H1 (cell line): ENCODE measurements at regions of chr1 and their contacts with region 1.

Region 1: GRCh38 chr1:93814059-93814794 is 64.8 kb downstream of the DNTTIP2 start:
- DNase-seq: peak in 1 of 2 experiments; percentile 67
- H3K4me3 ChIP-seq: no peak overlapping the region
- H3K27ac ChIP-seq: no peak overlapping the region
- H3K4me1 ChIP-seq: peaks cover 6 to 17% (median 7%) of the 10 kb centered on the region in 4 experiments; a peak in 6 of 7 replicates
- H3K27me3 ChIP-seq: no peaks in the 10 kb centered on the region
- CTCF ChIP-seq: peak in 2 of 3 experiments; percentile 97 to 99; a peak in 3 of 4 replicates
- EP300 ChIP-seq: no peak
- POLR2A ChIP-seq: no peak
- RAD21 ChIP-seq: peak; percentile 100

Region 2: GRCh38 chr1:93629099-93630059 is 184.8 kb before region 1 on chr1:
- CTCF ChIA-PET with region 1: interaction called, 620 read pairs
- POLR2A ChIA-PET with region 1: interaction called, 6 read pairs
- DNase-seq: no peak
- H3K4me3 ChIP-seq: no peak overlapping the region
- H3K27ac ChIP-seq: no peak overlapping the region
- H3K4me1 ChIP-seq: 0 out of 7 replicates have a peak, but pooled peaks cover 0 to 2% (median 0%) of the 10 kb centered on the region in 4 experiments
- H3K27me3 ChIP-seq: no peaks in the 10 kb centered on the region
- CTCF ChIP-seq: peak in 2 of 3 experiments; percentile 81 to 86; a peak in 3 of 4 replicates
- EP300 ChIP-seq: no peak; a peak in 1 of 3 replicates
- POLR2A ChIP-seq: no peak
- RAD21 ChIP-seq: peak; percentile 98 to 99

Region 3: GRCh38 chr1:93680757-93681550 is 133.3 kb before region 1 on chr1:
- CTCF ChIA-PET with region 1: interaction called, 23 read pairs
- POLR2A ChIA-PET with region 1: interaction called, 3 read pairs
- DNase-seq: peak; percentile 50 to 84
- H3K4me3 ChIP-seq: peak overlapping the region; percentile 64 to 87 (median 70)
- H3K27ac ChIP-seq: no peak overlapping the region
- H3K4me1 ChIP-seq: peaks cover 5 to 12% (median 5%) of the 10 kb centered on the region in 4 experiments
- H3K27me3 ChIP-seq: peaks cover 0 to 8% (median 2%) of the 10 kb centered on the region in 4 experiments; a peak in 4 of 7 replicates
- CTCF ChIP-seq: peak; percentile 59 to 91 (median 84)
- EP300 ChIP-seq: no peak
- POLR2A ChIP-seq: no peak; a peak in 1 of 3 replicates
- RAD21 ChIP-seq: peak; percentile 61 to 68

Region 4: DNA sequence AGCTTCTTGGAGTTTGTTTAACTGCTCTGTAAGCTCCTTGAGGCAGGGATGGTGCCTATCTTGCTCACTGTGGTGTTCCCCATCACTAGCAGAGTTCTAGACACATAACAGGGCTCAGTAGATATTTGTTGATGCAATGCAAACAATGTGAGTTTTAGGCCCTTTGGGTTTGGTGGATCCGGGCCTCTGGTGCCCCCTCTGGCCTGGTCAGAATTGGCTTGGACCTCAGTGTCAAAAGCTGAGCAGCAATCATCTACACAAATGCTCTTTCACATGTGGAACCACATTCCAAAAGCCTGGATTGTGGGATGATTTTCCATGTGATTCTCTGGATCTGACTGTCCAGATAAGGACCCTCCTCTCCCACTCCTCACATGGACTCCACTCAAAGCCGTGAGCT is 79.2 kb before region 1 on chr1:
- CTCF ChIA-PET with region 1: interaction called, 41 read pairs
- POLR2A ChIA-PET with region 1: no interaction called
- DNase-seq: no peak
- H3K4me3 ChIP-seq: no peak overlapping the region
- H3K27ac ChIP-seq: no peak overlapping the region
- H3K4me1 ChIP-seq: peaks cover 0 to 6% (median 1%) of the 10 kb centered on the region in 4 experiments; a peak in 2 of 7 replicates
- H3K27me3 ChIP-seq: peaks cover 0 to 2% (median 0%) of the 10 kb centered on the region in 4 experiments; a peak in 1 of 7 replicates
- CTCF ChIP-seq: peak; percentile 30 to 52 (median 51); a peak in 3 of 4 replicates
- EP300 ChIP-seq: no peak
- POLR2A ChIP-seq: no peak
- RAD21 ChIP-seq: peak; percentile 28 to 44

Region 5: GRCh38 chr1:93798301-93798700 is 15.9 kb before region 1 on chr1:
- CTCF ChIA-PET with region 1: interaction called, 24 read pairs
- POLR2A ChIA-PET with region 1: interaction called, 4 read pairs
- DNase-seq: no peak
- H3K4me3 ChIP-seq: no peak overlapping the region
- H3K27ac ChIP-seq: no peak overlapping the region
- H3K4me1 ChIP-seq: no peaks in the 10 kb centered on the region
- H3K27me3 ChIP-seq: no peaks in the 10 kb centered on the region
- CTCF ChIP-seq: no peak
- EP300 ChIP-seq: no peak
- POLR2A ChIP-seq: no peak
- RAD21 ChIP-seq: no peak

Region 6: GRCh38 chr1:93888896-93889295 is 74.7 kb after region 1 on chr1:
- CTCF ChIA-PET with region 1: no interaction called
- POLR2A ChIA-PET with region 1: no interaction called
- DNase-seq: no peak
- H3K4me3 ChIP-seq: peak overlapping the region in 1 of 4 experiments; percentile 42; a peak in 2 of 8 replicates
- H3K27ac ChIP-seq: no peak overlapping the region
- H3K4me1 ChIP-seq: peaks cover 0 to 8% (median 0%) of the 10 kb centered on the region in 4 experiments; a peak in 1 of 7 replicates
- H3K27me3 ChIP-seq: peaks cover 0 to 1% (median 0%) of the 10 kb centered on the region in 4 experiments; a peak in 1 of 7 replicates
- CTCF ChIP-seq: no peak
- EP300 ChIP-seq: no peak
- POLR2A ChIP-seq: no peak
- RAD21 ChIP-seq: no peak